GM13977 (cell line): ENCODE measurements at regions of chr10 and their contacts with region 1.

Region 1: GRCh38 chr10:96826438-96826837 is 5.7 kb upstream of the LCOR start:
- DNase-seq: no peak
- CTCF ChIP-seq: no peak

Region 2: GRCh38 chr10:96642973-96643372 is 183.5 kb before region 1 on chr10:
- in situ Hi-C with region 1: loop called (anchors 10 kb)
- DNase-seq: peak; percentile 49
- CTCF ChIP-seq: peak; percentile 79

Region 3: DNA sequence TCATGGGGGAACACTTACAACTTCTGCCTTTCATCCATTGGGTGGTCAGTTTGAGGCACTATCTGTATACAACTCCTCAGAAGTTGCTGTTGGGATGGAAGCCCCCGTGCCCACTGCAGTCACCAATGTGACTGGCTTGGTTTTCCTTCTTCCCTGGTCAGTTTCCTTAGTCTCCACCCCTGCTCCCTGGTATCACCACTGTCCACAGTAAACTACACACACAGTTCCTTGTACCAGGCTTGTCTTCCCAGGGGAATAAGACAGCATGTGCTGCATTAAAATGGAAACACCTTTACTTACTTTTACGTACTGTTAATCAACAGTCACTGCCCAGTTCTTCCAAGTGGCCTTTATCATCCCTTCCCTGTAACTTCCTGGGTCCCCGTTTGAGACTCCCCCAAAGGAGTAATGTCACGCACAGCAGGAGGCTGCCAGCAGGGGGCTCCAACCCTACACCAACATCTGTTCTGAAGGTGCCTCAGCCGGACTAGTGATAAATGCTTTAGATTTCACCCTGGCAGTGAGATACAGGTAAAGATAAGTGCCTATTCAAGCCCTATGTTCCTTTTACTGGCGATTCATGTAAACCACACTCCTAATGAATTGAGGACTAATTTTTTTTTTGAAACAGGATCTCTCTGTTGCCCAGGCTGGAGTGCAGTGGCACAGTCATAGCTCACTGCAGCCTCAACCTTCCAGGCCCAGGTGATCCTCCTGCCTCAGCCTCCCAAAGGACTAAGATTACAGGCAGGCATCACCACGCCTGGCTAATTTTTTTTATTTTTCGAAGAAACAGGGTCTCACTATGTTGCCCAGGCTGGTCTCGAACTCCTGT is 60.8 kb before region 1 on chr10:
- in situ Hi-C with region 1: loop called (anchors 10 kb)
- DNase-seq: peak; percentile 74
- CTCF ChIP-seq: peak; percentile 91